ENCODE measurements at regions of chr19 and their contacts with region 1.

Region 1: GRCh38 chr19:4400135-4400936 is at the start of gene SH3GL1:
- DNase-seq: peak; percentile 90 to 96 (median 95)
- ATAC-seq: peak; percentile 66 to 70
- H3K4me3 ChIP-seq: peak within 1 kb of the TSS; percentile 92
- H3K27ac ChIP-seq: peak within 1 kb of the TSS; percentile 94
- H3K4me1 ChIP-seq: peaks cover 11% of the 10 kb centered on the region
- H3K27me3 ChIP-seq: no peaks in the 10 kb centered on the region
- total RNA-seq, gene SH3GL1: 26.3 to 40.3 (median 31.8) TPM

Region 2: DNA sequence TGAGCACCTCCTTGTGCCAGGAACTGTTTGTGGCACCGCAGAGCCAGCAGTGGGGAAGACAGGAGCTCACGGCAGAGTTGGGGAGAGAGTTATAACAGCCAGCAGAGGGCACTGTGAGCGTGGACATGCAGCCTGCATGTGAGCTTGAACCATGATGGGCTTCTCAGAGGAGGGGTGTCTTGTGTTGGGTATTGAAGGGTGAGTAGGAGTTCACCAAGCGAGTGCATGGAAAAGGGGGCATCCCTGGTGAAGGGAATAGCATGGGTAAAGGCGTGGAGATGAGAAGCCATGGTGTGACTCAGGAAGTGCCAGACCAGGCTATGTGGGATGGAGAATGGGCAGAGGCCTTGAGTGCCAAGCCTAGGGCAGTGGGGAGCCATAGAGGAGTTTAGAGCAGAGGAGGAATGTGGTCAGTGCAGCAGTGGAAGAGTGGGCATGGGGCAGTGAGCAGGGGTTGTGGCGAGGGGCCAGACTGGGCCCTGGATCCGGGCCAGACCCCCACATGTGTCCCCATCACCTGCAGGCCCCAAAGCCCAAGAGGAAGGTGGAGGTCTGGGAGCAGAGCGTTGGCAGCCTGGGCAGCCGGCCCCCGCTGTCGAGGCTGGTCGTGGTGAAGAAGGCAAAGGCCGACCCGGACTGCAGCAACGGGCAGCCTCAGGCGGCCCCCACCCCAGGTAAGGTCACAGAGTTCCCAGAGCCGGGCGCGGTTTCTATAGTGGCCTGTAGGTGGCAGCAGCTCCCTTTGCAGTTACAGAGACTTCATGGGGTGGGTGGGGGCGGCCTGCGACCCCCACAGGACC is 133.0 kb before region 1 on chr19:
- intact Hi-C with region 1: loop called in 1 of 4 experiments (anchors 5 kb)
- DNase-seq: peak; percentile 47 to 84 (median 79)
- ATAC-seq: peak; percentile 55 to 62
- H3K4me3 ChIP-seq: no peak overlapping the region
- H3K27ac ChIP-seq: no peak overlapping the region
- H3K4me1 ChIP-seq: no peaks in the 10 kb centered on the region
- H3K27me3 ChIP-seq: no peaks in the 10 kb centered on the region

Region 3: GRCh38 chr19:4342615-4343369 is 57.5 kb before region 1 on chr19:
- intact Hi-C with region 1: loop called in 1 of 4 experiments (anchors 2 kb)
- DNase-seq: peak; percentile 96 to 98 (median 97)
- ATAC-seq: peak; percentile 97 to 98
- H3K4me3 ChIP-seq: peak overlapping the region; percentile 96
- H3K27ac ChIP-seq: peak overlapping the region; percentile 94
- H3K4me1 ChIP-seq: no peaks in the 10 kb centered on the region
- H3K27me3 ChIP-seq: no peaks in the 10 kb centered on the region

Region 4: DNA sequence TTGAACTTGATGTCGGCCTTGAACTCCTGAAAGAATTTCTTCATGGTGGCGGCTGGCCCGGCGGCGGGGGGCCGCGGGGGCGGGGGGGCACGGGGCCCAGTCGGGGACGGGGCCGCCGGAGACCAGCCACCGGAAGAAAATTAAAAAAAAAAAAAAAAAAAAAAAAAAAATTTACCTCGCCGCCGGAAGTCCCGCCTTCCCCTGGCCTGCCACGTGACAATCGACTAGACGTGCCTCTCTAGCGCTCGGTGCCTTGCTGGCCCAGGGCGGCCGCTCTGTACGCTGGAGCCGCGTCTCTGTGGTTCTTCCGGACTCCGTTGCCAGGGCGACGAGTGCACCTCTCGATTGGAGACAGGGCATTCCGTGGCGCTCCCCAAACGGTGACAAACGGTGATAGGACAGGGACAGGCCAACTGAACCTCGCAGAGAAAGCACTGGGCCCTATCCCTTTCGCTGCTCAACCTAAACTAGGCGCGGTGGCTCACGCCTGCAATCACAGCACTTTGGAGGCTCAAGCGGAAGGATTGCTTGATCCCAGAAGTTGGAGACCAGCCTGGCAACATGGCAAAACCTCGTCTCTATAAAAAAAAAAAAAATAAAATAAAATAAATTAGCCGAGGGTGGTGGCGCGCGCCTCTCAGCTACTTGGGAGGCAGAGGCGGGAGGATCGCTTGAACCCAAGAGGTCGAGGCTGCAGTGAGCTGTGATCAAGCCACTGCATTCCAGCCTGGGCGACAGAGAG is 57.5 kb after region 1 on chr19 and contains the start of gene UBXN6:
- intact Hi-C with region 1: loop called in 1 of 4 experiments (anchors 10 kb)
- DNase-seq: peak; percentile 99 to 100 (median 99)
- ATAC-seq: peak; percentile 91 to 93
- H3K4me3 ChIP-seq: peak within 1 kb of the TSS; percentile 95
- H3K27ac ChIP-seq: peak within 1 kb of the TSS; percentile 82
- H3K4me1 ChIP-seq: peaks cover 16% of the 10 kb centered on the region
- H3K27me3 ChIP-seq: no peaks in the 10 kb centered on the region
- total RNA-seq, gene UBXN6: 99.8 to 124 (median 112) TPM

Region 5: GRCh38 chr19:4482721-4483364 is 82.5 kb after region 1 on chr19:
- intact Hi-C with region 1: no loop called
- DNase-seq: no peak
- ATAC-seq: no peak
- H3K4me3 ChIP-seq: no peak overlapping the region
- H3K27ac ChIP-seq: no peak overlapping the region
- H3K4me1 ChIP-seq: no peaks in the 10 kb centered on the region
- H3K27me3 ChIP-seq: no peaks in the 10 kb centered on the region

Region 6: DNA sequence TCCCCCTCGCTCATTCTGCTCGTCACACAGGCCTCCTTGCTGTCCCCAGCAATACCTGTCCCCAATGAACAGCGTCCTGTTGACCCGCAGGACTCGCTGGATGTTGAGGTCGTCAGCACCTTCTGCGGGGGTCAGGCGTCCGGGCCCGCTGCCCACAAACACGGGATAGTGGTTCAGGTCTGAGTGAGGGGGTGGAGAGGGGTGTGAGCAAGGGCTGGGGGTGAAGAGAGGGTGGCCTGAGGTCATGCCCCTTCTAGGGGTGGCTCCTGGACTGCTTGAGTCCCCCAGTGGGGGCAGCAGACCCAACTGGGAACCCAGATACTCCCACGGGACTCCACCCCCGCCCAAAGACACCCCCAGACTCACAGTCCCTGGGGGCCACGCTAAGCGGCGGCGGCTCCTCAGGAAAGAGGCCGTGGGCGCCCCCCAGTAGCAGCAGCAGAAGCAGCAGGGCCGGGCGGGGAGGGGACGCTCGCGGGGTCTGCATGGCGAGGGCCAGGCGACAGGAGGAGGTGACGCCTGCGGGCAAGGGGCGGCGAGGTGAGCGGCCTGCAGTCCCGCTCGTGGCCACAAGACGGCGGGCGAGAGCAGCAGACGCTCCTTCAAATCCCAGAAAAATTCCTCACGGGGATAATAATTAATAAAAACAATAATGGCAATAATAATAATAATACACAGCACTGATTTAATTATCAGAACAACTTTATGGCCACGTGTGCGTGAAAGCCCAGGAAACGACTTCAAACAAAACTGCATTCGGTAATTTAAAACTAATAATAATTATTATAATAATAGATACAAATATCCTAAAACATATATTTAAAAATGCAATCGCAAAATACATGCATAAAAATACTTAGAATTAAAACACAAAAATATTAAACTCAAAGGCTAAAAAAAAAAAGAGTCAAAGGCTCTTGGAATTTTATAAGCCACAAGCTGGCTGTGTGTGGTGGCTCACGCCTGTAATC is 157.9 kb after region 1 on chr19:
- intact Hi-C with region 1: no loop called
- DNase-seq: peak in 2 of 3 donors; percentile 77 to 78
- ATAC-seq: no peak
- H3K4me3 ChIP-seq: peak overlapping the region; percentile 65
- H3K27ac ChIP-seq: no peak overlapping the region
- H3K4me1 ChIP-seq: no peaks in the 10 kb centered on the region
- H3K27me3 ChIP-seq: no peaks in the 10 kb centered on the region